ENCODE measurements at regions of chr15 and their contacts with region 1.

Region 1: GRCh38 chr15:92797168-92797951 is 102.8 kb upstream of the CHD2 start:
- DNase-seq: peak; percentile 81
- ATAC-seq: peak; percentile 69
- H3K4me3 ChIP-seq: no peak overlapping the region
- H3K27ac ChIP-seq: peak overlapping the region; percentile 60; the same call in 1 of the 2 replicates
- H3K4me1 ChIP-seq: peaks cover 12% of the 10 kb centered on the region
- H3K27me3 ChIP-seq: no peaks in the 10 kb centered on the region
- CTCF ChIP-seq: peak; percentile 75
- POLR2A ChIP-seq: no peak
- RAD21 ChIP-seq: peak; percentile 73

Region 2: GRCh38 chr15:92097474-92098178 is 699.7 kb before region 1 on chr15:
- CTCF ChIA-PET with region 1: no interaction called
- POLR2A ChIA-PET with region 1: no interaction called
- dilution Hi-C with region 1: no loop called
- in situ Hi-C with region 1: no loop called
- intact Hi-C with region 1: loop called (anchors 10 kb)
- DNase-seq: peak; percentile 46
- ATAC-seq: peak; percentile 98
- H3K4me3 ChIP-seq: no peak overlapping the region
- H3K27ac ChIP-seq: no peak overlapping the region
- H3K4me1 ChIP-seq: no peaks in the 10 kb centered on the region
- H3K27me3 ChIP-seq: no peaks in the 10 kb centered on the region
- CTCF ChIP-seq: peak; percentile 86
- POLR2A ChIP-seq: no peak
- RAD21 ChIP-seq: peak; percentile 82

Region 3: DNA sequence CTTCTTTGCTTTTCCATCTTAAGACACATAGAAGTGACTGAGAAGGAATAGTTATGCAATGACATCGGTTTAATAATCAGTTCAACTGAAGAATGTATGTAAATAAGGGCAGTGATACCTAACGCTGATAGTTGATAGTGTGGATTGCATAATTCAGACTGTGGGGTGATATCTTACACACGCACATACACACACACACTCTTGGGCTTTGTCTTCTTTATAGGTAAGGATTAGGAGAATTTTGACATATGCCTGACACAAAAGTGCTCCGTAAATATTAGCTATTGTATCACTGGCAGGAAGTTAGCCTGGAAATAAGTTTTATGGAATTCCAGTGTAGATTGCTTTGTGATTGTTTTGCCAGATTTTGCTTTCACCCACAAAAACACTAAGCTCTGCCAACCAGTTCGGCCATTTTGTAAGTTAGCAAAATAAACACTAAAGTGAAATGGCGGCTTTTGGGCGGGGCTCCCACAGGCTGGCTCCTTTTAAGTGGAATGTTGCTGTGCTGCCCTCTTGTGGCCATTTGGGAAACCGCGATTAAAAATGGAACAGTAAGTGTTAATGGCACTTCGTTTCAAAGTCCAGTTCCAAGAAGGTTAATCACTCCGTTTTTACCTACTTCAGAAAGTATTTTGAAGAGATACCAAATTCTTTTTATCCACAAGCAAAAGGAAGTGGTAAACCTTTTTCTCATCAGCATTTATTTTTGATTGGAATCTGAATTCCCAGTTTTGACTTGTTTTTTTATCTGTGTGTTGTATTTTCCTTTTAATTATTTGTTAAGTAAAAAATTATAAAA is 120.4 kb after region 1 on chr15:
- CTCF ChIA-PET with region 1: interaction called, 6 read pairs
- POLR2A ChIA-PET with region 1: interaction called, 7 read pairs
- dilution Hi-C with region 1: no loop called
- in situ Hi-C with region 1: loop called (anchors 5 kb)
- intact Hi-C with region 1: loop called (anchors 1 kb)
- DNase-seq: peak; percentile 93
- ATAC-seq: peak; percentile 61
- H3K4me3 ChIP-seq: no peak overlapping the region
- H3K27ac ChIP-seq: peak overlapping the region; percentile 88; the same call in 1 of the 2 replicates
- H3K4me1 ChIP-seq: peaks cover 31% of the 10 kb centered on the region
- H3K27me3 ChIP-seq: no peaks in the 10 kb centered on the region
- CTCF ChIP-seq: peak; percentile 94
- POLR2A ChIP-seq: peak; percentile 33; the same call in 1 of the 2 replicates
- RAD21 ChIP-seq: peak; percentile 85

Region 4: GRCh38 chr15:93030430-93031105 is 233.2 kb after region 1 on chr15:
- CTCF ChIA-PET with region 1: interaction called, 4 read pairs
- POLR2A ChIA-PET with region 1: no interaction called
- dilution Hi-C with region 1: no loop called
- in situ Hi-C with region 1: loop called (anchors 10 kb)
- intact Hi-C with region 1: no loop called
- DNase-seq: peak; percentile 47
- ATAC-seq: peak; percentile 83
- H3K4me3 ChIP-seq: no peak overlapping the region
- H3K27ac ChIP-seq: no peak overlapping the region
- H3K4me1 ChIP-seq: peaks cover 22% of the 10 kb centered on the region
- H3K27me3 ChIP-seq: no peaks in the 10 kb centered on the region
- CTCF ChIP-seq: peak; percentile 79
- POLR2A ChIP-seq: no peak
- RAD21 ChIP-seq: peak; percentile 81

Region 5: GRCh38 chr15:94324117-94324826 is 1526.9 kb after region 1 on chr15:
- CTCF ChIA-PET with region 1: no interaction called
- POLR2A ChIA-PET with region 1: no interaction called
- dilution Hi-C with region 1: no loop called
- in situ Hi-C with region 1: no loop called
- intact Hi-C with region 1: loop called (anchors 5 kb)
- DNase-seq: peak; percentile 65
- ATAC-seq: peak; percentile 97
- H3K4me3 ChIP-seq: no peak overlapping the region
- H3K27ac ChIP-seq: no peak overlapping the region
- H3K4me1 ChIP-seq: no peaks in the 10 kb centered on the region
- H3K27me3 ChIP-seq: no peaks in the 10 kb centered on the region
- CTCF ChIP-seq: peak; percentile 92
- POLR2A ChIP-seq: no peak
- RAD21 ChIP-seq: peak; percentile 93